ENCODE measurements at regions of chr2 and their contacts with region 1.

Region 1: DNA sequence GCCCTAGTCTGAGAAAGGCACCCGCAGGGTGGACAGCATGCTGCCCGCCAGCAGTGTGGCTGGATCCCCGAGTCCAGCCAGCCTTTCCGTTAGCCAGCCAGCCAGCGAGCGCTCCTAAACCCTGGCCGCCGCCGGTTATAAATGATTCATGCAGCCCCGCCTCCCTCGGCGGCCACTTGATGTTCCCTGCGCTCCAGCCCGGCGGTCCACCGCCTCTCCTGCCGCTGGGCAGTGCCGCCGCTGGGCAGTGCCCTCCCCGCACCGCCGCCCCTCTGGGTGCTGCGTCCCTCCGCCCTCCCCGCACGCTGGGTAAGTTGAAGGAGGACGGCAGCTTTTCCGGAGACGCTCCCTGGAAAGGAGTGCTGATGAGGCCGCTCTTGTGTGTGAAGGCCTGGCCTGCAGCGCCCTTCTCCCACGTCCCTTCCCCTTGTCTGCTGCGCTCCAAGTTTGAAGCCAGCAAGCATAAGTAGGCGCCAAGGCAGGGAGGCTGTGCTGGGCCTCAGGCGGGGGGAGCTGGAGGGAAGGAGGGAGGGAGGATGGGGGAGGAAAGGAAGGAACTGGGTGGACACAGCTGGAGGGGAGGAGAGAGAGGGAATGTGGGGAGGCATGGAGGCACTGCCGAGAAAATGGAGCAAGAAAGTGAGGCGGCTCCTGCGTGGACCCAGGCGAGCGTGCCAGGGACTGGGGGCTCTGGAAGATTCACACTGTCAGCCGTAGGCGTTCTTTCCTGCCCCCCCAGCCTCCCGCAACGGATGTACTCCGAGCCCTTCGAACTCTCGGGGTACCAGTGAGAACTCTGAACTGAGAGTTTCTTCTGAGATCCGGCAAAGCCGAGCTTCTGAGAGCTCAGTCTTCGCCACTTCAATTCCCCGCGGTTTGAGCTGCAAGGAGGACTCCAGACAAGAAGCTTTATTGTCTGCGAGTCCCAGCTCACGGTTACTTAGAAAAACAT is 131.9 kb downstream of the GLI2 start:
- DNase-seq: peak; percentile 60
- H3K4me3 ChIP-seq: no peak overlapping the region
- H3K27ac ChIP-seq: no peak overlapping the region
- H3K4me1 ChIP-seq: peaks cover 5% of the 10 kb centered on the region
- H3K27me3 ChIP-seq: peaks cover 4 to 10% of the 10 kb centered on the region in 2 experiments
- CTCF ChIP-seq: no peak
- POLR2A ChIP-seq: no peak

Region 2: DNA sequence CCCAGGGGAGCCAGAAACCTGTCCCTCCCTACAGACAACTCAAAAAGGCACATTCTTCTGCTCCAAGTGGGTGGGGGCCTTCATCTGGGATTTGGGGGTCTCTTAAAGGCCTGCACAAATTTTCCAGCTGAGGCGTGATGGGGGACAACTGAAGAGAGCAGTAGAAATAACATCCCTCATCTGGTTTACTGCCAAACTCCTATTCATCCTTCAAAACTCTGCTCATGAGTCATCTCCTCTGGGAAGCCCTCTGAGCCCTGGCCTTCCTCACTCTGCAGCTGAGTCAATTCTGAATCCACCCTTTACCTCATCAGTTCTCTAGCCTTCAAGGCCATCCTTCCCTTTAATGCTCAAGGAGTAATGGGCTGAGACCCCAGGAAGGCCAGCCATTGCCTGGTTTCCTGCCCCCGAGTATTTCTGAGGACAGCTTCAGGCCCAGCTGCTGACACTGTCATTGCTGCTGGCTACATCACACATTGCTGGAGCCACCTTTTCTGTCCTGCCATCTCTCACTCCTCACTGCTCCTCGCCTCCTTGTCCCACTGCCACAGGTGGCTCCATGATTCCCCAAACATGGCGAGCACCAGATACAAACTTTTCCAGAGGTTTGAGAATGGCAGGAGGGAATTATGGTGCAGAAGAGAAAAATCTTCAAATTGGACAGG is 164.1 kb before region 1 on chr2:
- CTCF ChIA-PET with region 1: no interaction called
- POLR2A ChIA-PET with region 1: no interaction called
- dilution Hi-C with region 1: no loop called
- intact Hi-C with region 1: loop called (anchors 5 kb)
- DNase-seq: peak; percentile 61
- H3K4me3 ChIP-seq: no peak overlapping the region
- H3K27ac ChIP-seq: no peak overlapping the region
- H3K4me1 ChIP-seq: peaks cover 4% of the 10 kb centered on the region
- H3K27me3 ChIP-seq: peaks cover 2 to 5% of the 10 kb centered on the region in 2 experiments
- CTCF ChIP-seq: no peak
- POLR2A ChIP-seq: no peak

Region 3: GRCh38 chr2:120735746-120736170 is 131.8 kb before region 1 on chr2 and contains the start of gene GLI2:
- CTCF ChIA-PET with region 1: no interaction called
- POLR2A ChIA-PET with region 1: no interaction called
- dilution Hi-C with region 1: no loop called
- intact Hi-C with region 1: loop called (anchors 5 kb)
- DNase-seq: peak; percentile 63
- H3K4me3 ChIP-seq: peak within 1 kb of the TSS in 1 of 3 experiments; percentile 8
- H3K27ac ChIP-seq: no peak within 1 kb of the TSS
- H3K4me1 ChIP-seq: no peaks in the 10 kb centered on the region
- H3K27me3 ChIP-seq: peaks cover 63 to 83% of the 10 kb centered on the region in 2 experiments
- CTCF ChIP-seq: peak; percentile 56 to 64
- POLR2A ChIP-seq: no peak
- total RNA-seq, gene GLI2: 0.13 and 0.51 TPM in 2 replicates

Region 4: DNA sequence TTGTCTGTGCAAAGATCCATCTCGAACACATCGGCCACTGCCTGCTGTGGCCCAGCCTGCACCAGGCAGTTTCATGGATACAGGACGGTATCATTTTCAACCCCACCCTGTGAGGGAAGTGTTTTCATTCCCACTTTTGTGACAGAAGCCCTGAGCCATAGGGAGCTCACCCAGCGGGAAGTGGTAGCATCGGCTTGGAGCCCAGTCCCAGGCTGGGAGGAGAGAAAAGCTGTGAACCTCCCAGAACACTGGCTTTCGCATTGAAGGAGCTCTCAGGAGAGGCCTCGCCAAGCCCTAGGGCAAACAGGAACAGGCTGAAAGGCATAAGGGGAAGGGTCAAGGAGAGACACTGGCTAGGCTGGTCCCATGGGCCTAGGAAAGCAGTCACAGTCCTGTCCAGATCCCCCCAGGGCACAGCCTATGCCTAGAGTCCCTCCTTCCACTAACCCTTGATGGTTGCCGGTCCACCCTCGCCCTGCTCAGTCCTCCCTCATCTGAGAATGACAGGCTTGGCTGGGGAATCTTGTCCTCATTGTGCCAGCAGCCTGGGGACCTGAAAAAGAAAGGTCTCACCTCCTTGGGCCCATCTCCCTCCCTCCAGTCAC is 251.5 kb after region 1 on chr2:
- CTCF ChIA-PET with region 1: no interaction called
- POLR2A ChIA-PET with region 1: no interaction called
- dilution Hi-C with region 1: no loop called
- intact Hi-C with region 1: no loop called
- DNase-seq: no peak
- H3K4me3 ChIP-seq: no peak overlapping the region
- H3K27ac ChIP-seq: no peak overlapping the region
- H3K4me1 ChIP-seq: no peaks in the 10 kb centered on the region
- H3K27me3 ChIP-seq: no peaks in the 10 kb centered on the region
- CTCF ChIP-seq: no peak
- POLR2A ChIP-seq: no peak

Measured in endothelial cell of umbilical vein (primary cell).